Ovary (tissue), 10 donors: ENCODE measurements at regions of chr11 and their contacts with region 1.

Region 1: DNA sequence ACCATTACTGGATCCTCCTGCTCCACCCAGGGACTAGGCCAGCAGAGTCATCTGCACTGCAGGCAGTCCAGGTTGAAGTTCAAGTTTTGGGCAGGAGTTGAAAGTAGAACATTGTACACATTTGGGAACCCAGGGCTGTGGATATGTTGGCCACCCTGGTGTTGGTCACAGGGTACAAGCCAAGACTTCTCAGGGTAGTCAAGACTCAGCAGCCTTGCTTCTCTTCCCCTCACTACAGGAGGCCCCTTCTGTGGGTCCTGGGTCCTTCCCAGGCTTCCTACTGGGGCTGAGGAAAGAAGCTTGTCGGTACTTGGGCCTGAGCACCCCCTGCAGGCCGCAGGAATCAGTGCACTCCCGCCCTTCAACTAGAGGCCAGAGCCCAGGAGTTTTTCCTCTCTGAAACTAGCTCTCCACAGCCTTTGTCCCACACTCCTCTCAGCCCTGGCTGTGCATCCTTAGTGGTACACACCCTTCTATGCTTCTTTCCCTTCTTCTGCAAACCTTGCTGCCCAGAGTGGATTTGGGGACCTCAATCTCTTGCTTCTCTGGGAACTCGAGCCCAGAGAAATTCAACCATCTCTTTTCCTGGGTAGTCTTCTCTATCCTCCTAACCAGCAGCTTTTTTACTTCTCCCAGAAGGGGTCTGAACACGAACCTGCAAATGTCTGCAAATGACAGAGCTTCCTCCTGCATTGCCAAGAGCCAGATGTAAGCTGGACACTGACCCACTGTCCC is 2.6 kb upstream of the HPX start:
- DNase-seq: peak; percentile 35 to 71 (median 62)
- H3K4me3 ChIP-seq: no peak overlapping the region
- H3K27ac ChIP-seq: no peak overlapping the region
- H3K4me1 ChIP-seq: no peaks in the 10 kb centered on the region
- H3K27me3 ChIP-seq: no peaks in the 10 kb centered on the region
- CTCF ChIP-seq: peak; percentile 53 to 69 (median 53)
- EP300 ChIP-seq: no peak
- POLR2A ChIP-seq: no peak

Region 2: GRCh38 chr11:6022956-6023355 is 420.5 kb before region 1 on chr11:
- intact Hi-C with region 1: loop called in 1 of 4 experiments (anchors 10 kb)
- DNase-seq: no peak
- H3K4me3 ChIP-seq: no peak overlapping the region
- H3K27ac ChIP-seq: no peak overlapping the region
- H3K4me1 ChIP-seq: no peaks in the 10 kb centered on the region
- H3K27me3 ChIP-seq: no peaks in the 10 kb centered on the region
- CTCF ChIP-seq: no peak
- EP300 ChIP-seq: no peak
- POLR2A ChIP-seq: no peak

Region 3: DNA sequence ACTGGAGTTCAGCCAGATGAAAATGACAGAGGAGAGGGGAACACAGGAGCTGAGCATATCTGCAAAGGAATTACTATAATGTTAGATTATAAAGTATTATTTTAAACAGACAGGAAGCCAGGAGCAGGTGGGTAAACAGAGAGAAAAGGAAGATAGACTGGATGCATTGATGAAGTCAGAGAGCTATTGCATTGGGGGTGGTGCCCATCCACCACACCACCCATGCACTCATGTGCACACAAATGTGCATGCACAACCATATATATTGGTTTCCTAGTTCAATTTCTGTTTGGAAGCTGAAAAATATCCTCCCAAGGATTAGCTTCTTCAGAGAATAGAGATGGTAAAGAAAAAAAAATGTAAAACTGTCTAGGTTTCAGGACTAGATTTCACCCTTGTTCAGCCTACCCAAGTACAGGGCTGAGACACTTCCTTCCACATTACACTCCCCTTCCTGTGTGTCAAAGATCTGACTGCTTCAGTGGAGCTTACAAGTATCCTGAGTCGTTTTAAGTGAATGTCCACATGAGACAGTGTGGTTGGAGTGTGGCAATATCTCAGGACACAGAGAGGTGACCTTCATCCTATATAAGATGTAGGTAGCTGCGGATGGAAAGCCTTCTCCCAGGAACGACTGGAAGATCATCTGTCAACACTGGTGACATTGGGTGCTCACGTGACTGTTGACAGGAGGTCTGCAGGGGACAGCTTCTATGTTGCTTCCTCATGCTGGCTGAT is 65.4 kb before region 1 on chr11:
- intact Hi-C with region 1: loop called (anchors 2 to 5 kb)
- DNase-seq: no peak
- H3K4me3 ChIP-seq: no peak overlapping the region
- H3K27ac ChIP-seq: no peak overlapping the region
- H3K4me1 ChIP-seq: no peaks in the 10 kb centered on the region
- H3K27me3 ChIP-seq: no peaks in the 10 kb centered on the region
- CTCF ChIP-seq: no peak
- EP300 ChIP-seq: no peak
- POLR2A ChIP-seq: no peak

Region 4: DNA sequence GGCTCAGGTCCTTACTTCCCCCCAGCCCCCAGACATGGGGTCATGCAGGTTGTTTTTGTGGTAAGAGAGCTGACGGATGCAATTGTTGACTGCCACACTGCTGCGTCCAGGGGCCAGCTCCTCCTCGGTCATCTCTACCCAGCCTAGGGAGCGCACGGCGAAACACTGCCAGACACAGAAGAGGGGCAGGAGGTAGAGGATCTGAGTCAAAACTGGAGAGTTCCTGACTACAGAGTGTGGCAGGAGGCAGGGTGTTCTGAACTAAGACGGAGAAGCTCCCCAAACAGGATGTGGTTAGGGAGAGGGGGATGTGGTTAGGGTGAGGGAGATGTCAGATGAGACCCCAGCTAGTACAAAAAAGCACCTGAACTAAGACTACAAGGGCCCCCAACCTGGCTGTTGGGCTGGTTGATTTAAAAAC is 40.9 kb before region 1 on chr11:
- intact Hi-C with region 1: no loop called
- DNase-seq: no peak
- H3K4me3 ChIP-seq: no peak overlapping the region
- H3K27ac ChIP-seq: no peak overlapping the region
- H3K4me1 ChIP-seq: peaks cover 6% of the 10 kb centered on the region
- H3K27me3 ChIP-seq: no peaks in the 10 kb centered on the region
- CTCF ChIP-seq: no peak
- EP300 ChIP-seq: no peak
- POLR2A ChIP-seq: no peak

Region 5: DNA sequence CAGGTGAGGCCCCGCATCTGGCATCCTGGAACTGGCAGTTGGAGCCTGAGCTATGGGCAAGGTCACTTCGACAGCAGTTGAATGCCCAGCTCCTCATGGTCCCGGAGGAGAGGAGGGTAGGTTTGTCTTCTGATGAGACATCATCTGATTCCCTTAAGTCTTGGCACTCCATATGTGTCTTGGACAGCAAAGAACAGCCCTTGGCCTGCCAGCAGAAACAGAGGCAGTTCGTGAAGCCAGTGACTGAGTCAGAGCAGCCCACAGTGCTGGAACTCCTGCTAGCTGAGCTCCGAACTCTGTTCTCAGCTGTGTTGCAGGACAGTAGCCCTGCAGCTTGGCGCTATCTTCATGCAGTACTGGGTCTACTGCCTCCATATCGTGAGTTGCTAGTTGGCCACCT is 54.7 kb after region 1 on chr11:
- intact Hi-C with region 1: no loop called
- DNase-seq: no peak
- H3K4me3 ChIP-seq: no peak overlapping the region
- H3K27ac ChIP-seq: no peak overlapping the region
- H3K4me1 ChIP-seq: peaks cover 7% of the 10 kb centered on the region
- H3K27me3 ChIP-seq: no peaks in the 10 kb centered on the region
- CTCF ChIP-seq: no peak
- EP300 ChIP-seq: no peak
- POLR2A ChIP-seq: no peak